ENCODE measurements at regions of chr3 and their contacts with region 1.

Region 1: DNA sequence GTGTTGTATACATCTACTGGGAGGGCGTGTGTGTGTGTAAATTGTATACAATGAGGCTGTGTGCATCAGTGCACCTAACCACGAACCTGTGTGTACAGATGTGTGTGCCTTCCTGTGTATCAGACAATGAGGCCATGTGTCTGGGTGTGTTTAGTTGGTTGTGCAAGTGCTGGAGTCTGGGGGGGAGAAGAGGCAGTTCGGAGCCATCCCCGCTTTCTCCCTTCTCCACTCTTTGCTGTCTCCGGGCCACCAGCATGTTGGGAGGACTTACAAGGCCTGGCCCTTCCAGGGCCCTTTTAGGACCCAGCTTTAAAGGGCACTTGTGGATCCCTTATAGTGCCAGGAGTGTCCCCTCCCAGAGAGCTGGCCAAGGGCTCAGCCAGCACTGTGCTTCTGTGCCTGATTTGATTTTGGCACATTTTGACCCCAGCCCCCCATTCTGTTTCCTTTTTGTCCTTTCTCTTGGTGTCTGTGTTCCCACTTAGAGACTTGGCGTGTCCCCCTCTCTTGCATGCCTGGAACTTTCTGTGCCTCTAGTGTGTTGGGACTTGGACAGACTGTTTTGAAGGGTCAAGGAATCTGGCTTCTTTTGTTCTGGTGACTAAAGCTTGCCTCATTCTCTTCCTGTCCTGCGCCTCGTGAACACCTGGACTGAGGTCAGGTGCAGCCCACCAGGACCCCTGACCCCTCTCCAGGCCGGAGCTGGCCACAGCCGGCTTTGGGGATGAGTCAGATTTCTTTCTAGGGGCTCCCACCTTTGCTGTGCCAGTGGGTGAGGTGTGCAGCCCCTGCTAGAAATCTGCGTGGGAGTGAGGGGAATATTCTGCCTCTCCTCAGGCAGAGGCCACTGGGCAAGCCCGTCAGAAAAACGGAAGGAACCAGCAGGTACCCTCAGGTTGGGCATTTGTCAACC is 1.5 kb downstream of the CTDSPL start:
- DNase-seq: no peak
- ATAC-seq: peak in 1 of 8 donors; percentile 50
- H3K4me3 ChIP-seq: peak overlapping the region in 9 of 10 donors; percentile 69 to 83 (median 75)
- H3K27ac ChIP-seq: peak overlapping the region; percentile 69 to 92 (median 87)
- H3K4me1 ChIP-seq: peaks cover 10 to 51% (median 44%) of the 10 kb centered on the region in 9 donors
- H3K27me3 ChIP-seq: no peaks in the 10 kb centered on the region
- CTCF ChIP-seq: peak in 1 of 9 donors; percentile 13

Region 2: DNA sequence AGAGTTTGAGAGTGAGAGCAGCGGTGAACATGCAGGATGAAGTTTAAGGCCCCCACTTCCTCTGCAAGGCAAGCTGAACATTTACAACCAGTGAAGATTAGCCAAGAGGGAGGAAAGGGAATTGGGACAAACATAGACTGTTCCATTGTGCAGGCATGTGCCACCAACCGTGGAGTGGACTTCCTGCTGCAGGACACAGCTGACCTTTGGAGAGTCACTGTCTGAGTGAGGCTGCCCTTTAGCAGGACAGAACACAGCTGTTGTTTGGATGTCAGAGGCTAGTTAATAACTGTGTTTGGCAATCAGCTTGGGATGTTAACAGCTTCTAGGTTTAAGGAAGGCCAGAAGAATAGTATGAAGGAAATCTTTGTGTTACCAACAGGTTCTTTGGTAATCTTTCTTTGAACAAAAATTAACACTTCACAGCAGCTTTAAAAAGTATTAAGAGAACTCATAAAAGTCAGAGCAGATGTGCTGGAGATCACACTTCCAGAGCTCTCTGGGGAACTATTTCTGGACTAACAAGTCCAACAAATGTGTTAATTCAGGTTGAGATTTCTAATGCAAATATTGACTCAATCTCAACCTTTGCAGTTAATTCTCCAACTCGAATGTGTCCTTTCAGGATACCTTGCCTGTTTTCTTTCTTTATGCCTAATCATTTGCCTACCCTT is 29.9 kb after region 1 on chr3:
- intact Hi-C with region 1: loop called in 1 of 10 experiments (anchors 1 kb)
- DNase-seq: peak; percentile 58 to 67
- ATAC-seq: peak; percentile 88 to 98 (median 92)
- H3K4me3 ChIP-seq: no peak overlapping the region
- H3K27ac ChIP-seq: peak overlapping the region in 9 of 10 donors; percentile 14 to 66 (median 58)
- H3K4me1 ChIP-seq: peaks cover 7 to 87% (median 71%) of the 10 kb centered on the region in 9 donors
- H3K27me3 ChIP-seq: no peaks in the 10 kb centered on the region
- CTCF ChIP-seq: no peak

Region 3: GRCh38 chr3:38004415-38005076 is 141.4 kb after region 1 on chr3:
- intact Hi-C with region 1: loop called in 2 of 10 experiments (anchors 2 to 5 kb)
- DNase-seq: peak; percentile 65 to 75
- ATAC-seq: peak; percentile 58 to 79 (median 77)
- H3K4me3 ChIP-seq: peak overlapping the region in 6 of 10 donors; percentile 17 to 51 (median 42)
- H3K27ac ChIP-seq: peak overlapping the region; percentile 1 to 83 (median 56)
- H3K4me1 ChIP-seq: peaks cover 0 to 24% (median 6%) of the 10 kb centered on the region in 9 donors
- H3K27me3 ChIP-seq: no peaks in the 10 kb centered on the region
- CTCF ChIP-seq: peak; percentile 48 to 81 (median 70)